Cardiac septum (tissue), 1 donor: ENCODE measurements at regions of chr15 and their contacts with region 1.

Region 1: GRCh38 chr15:29821416-29822131 is 694 bp downstream of the TJP1 start:
- DNase-seq: peak; percentile 86

Region 2: DNA sequence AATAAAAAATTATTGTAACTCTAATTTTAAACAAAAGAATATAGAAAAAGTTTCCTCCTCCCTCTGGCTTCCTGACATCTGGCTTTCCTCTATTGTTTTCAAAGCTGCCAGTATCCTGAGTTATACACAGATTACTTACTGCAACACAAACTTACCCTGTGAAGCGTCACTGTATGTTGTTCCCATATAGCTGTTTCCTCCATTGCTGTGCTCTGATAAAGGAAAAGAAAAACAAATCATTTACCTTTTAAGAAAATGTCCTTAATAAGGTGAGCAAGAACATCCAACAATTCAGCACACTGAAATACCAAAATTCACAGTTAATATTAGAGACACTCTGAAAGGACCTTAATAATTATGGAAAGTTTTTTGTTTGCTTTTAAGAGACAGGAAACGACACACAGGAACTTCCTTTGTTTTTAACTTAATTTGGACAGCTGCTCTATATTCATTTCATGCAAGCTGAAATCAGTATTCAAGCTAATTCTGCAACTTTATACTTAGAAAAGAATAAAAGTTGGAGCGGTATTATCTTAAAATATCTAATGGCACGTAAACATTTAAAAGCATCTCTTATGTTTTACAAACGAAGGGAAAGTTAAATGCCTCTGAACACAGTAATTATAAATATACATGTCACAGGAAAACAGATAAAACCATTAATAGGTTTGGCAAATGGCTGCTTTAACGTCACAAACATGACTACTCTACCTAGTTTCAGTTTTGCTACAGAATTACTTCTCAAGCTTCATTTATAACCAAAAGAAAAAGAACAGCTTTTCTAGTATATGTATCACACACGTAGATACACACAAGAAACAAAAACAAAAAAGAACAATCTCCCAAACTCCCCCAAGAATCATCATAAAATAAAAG is 20.8 kb before region 1 on chr15:
- intact Hi-C with region 1: no loop called
- DNase-seq: no peak

Region 3: GRCh38 chr15:29888646-29889045 is 67.1 kb after region 1 on chr15:
- intact Hi-C with region 1: loop called (anchors 5 kb)
- DNase-seq: no peak